SK-MEL-5 (cell line): ENCODE measurements at regions of chr4 and their contacts with region 1.

Region 1: GRCh38 chr4:185726931-185727330 is 85.1 kb downstream of the SORBS2 start:
- DNase-seq: no peak

Region 2: DNA sequence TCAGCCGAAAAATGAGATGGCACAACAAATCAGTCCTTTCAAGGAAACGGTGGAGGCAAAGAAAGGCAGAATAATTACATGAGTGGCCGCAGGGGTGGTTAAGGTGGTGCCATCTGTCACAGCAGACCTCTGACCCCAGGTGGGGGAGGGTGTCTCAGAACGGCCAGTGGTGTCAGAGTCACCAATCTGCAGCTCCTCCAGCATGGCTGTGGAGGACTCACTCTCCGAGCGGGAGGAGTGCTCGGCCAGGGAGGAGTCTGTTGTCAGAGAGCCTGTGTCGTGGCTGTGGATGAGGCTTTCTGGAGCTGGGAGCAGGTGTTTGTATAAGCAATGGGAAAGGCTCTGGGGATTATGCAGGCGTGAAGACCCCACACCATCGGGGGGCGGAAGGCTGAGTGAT is 61.3 kb before region 1 on chr4:
- in situ Hi-C with region 1: loop called (anchors 10 kb)
- DNase-seq: no peak